CD8-positive, alpha-beta memory T cell (primary cell): ENCODE measurements at regions of chr20 and their contacts with region 1.

Region 1: DNA sequence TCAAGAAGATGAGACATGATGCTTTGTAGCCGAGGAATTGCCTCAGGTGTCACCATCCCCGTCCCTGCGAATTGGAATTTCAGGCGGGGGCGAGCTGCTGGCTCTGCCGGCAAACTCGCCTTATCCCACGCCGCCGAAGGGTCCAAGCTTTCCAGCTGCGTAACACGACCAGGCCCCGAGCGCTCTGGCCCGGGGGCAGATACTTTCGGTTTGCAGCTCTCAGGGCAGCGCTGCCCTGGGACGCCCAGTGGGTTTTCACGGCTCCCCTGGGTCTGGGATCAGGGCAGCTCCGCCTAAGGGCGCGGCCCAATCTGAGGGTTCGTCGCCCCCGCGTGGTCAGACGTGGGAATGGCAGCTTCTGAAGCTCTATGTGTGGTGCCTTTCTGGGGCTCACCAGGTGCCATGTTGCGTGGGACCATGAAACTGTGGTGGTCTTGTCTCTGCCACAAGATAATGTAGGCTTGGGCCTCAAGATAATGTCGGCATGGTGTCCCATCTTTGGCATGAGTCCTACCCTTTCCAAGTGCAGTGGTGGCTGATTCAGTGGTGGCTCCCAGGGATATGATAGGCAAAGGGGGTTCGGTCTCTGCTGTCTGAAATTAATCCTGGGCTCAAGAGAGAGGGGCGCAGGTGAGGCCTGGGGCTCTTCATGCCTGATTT is 20.9 kb downstream of the PIGT start:
- DNase-seq: peak; percentile 78 to 90 (median 84)
- H3K4me3 ChIP-seq: peak overlapping the region; percentile 89
- H3K4me3 Mint-ChIP-seq: peak overlapping the region; percentile 80 to 92 (median 87)
- H3K27ac ChIP-seq: no peak overlapping the region
- H3K27ac Mint-ChIP-seq: peak overlapping the region; percentile 41 to 94 (median 72)
- H3K4me1 ChIP-seq: peaks cover 17% of the 10 kb centered on the region
- H3K4me1 Mint-ChIP-seq: peaks cover 19 to 27% (median 25%) of the 10 kb centered on the region in 3 donors
- H3K27me3 ChIP-seq: no peaks in the 10 kb centered on the region
- H3K27me3 Mint-ChIP-seq: no peaks in the 10 kb centered on the region

Region 2: DNA sequence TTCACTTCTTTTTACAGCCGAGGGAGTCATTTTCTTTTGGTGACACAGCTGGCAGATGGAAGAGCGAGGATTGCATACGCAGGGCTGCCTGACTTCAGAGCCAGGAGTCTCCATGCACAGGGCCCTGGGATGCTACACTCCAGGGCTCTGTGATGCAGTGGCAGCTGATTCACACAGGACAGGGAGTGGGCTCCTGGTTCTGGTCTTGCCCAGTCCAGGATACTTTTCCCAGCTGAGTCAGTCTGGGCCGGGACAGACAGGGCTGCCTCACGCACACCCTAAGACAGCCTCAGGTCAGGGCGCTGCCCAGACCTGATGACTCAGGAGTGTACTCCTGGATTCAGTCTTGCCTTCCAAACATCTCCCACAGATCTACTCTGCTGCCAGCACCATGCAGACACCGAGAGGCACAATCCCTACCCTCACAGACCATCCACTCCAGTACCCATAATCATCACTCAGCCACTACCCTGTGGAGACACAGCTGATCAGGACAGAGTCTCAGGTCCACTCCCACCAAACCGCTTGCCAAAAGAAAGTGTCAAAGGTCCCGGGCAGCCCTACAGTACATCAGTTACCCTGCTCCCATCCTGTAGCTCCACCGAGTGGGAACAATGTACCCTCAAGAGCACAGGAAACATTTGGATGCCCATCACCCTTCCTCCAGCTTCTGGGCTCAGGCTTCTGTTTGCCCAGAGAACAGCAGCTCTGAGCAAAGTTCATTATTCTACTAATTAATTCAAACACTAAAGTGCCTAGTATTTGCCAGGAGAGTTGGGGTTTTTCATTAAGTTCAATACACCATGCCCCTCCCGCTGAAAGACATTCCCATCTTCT is 100.1 kb before region 1 on chr20:
- CTCF ChIA-PET with region 1: interaction called, 10 read pairs
- POLR2A ChIA-PET with region 1: no interaction called
- DNase-seq: no peak
- H3K4me3 ChIP-seq: no peak overlapping the region
- H3K4me3 Mint-ChIP-seq: no peak overlapping the region
- H3K27ac ChIP-seq: no peak overlapping the region
- H3K27ac Mint-ChIP-seq: peak overlapping the region in 1 of 8 donors; percentile 23
- H3K4me1 ChIP-seq: no peaks in the 10 kb centered on the region
- H3K4me1 Mint-ChIP-seq: no peaks in the 10 kb centered on the region
- H3K27me3 ChIP-seq: no peaks in the 10 kb centered on the region
- H3K27me3 Mint-ChIP-seq: no peaks in the 10 kb centered on the region

Region 3: GRCh38 chr20:45362804-45363610 is 73.9 kb before region 1 on chr20 and contains the start of gene SYS1:
- CTCF ChIA-PET with region 1: interaction called, 183 read pairs
- POLR2A ChIA-PET with region 1: interaction called, 33 read pairs
- DNase-seq: peak; percentile 98 to 99 (median 99)
- H3K4me3 ChIP-seq: peak within 1 kb of the TSS; percentile 92
- H3K4me3 Mint-ChIP-seq: peak within 1 kb of the TSS; percentile 90 to 99 (median 98)
- H3K27ac ChIP-seq: peak within 1 kb of the TSS; percentile 96
- H3K27ac Mint-ChIP-seq: peak within 1 kb of the TSS; percentile 95 to 100 (median 99)
- H3K4me1 ChIP-seq: peaks cover 42% of the 10 kb centered on the region
- H3K4me1 Mint-ChIP-seq: peaks cover 44 to 54% (median 48%) of the 10 kb centered on the region in 3 donors
- H3K27me3 ChIP-seq: no peaks in the 10 kb centered on the region
- H3K27me3 Mint-ChIP-seq: peaks cover 0 to 1% of the 10 kb centered on the region in 2 donors
- total RNA-seq, gene SYS1: 48.3 to 54.0 TPM

Region 4: DNA sequence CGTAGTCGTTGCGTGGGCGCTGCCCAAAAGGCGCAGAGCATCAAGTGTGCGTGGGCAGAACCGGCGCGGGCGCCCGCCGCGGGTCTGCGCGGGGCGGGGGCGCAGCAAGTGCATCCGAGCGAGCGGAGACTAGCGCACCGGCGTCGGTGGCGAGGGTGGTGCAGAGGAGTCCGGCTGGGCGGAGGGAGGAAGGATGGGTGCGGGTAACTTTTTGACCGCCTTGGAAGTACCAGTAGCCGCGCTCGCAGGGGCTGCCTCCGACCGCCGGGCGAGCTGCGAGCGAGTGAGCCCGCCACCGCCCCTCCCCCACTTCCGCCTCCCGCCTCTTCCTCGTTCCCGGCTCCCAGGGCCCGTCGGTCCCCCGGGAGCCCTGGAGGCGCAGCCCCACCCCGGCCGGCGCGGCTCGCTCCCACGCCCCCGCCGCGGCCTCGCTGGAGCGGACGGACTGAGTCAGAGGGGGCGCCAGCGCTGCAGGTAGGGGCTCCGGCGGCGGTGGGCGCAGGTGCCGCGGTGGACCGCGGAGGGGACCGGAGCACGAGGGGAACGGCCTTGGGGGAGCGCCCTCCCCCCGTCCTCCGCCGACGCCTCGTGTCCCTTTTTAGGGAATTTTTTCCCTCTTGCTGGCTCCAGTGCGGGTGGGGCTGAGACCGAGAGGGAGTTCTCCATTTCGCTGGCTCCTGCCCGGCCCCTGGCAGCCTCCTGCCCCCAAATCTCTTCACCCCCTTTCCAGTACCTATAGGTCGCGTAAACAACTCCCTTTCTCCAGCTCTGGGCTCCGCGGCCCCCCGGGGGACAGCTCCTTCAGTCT is 30.4 kb before region 1 on chr20:
- CTCF ChIA-PET with region 1: interaction called, 10 read pairs
- POLR2A ChIA-PET with region 1: no interaction called
- DNase-seq: peak; percentile 34 to 64 (median 42)
- H3K4me3 ChIP-seq: peak overlapping the region; percentile 73
- H3K4me3 Mint-ChIP-seq: peak overlapping the region; percentile 77 to 95 (median 82)
- H3K27ac ChIP-seq: peak overlapping the region; percentile 57
- H3K27ac Mint-ChIP-seq: peak overlapping the region in 6 of 8 donors; percentile 26 to 87 (median 58)
- H3K4me1 ChIP-seq: peaks cover 5% of the 10 kb centered on the region
- H3K4me1 Mint-ChIP-seq: peaks cover 8 to 23% (median 17%) of the 10 kb centered on the region in 3 donors
- H3K27me3 ChIP-seq: no peaks in the 10 kb centered on the region
- H3K27me3 Mint-ChIP-seq: peaks cover 0 to 3% of the 10 kb centered on the region in 2 donors

Region 5: GRCh38 chr20:45450097-45450818 is 13.4 kb after region 1 on chr20:
- CTCF ChIA-PET with region 1: interaction called, 29 read pairs
- POLR2A ChIA-PET with region 1: no interaction called
- DNase-seq: peak in 2 of 5 donors; percentile 30 to 32
- H3K4me3 ChIP-seq: no peak overlapping the region
- H3K4me3 Mint-ChIP-seq: no peak overlapping the region
- H3K27ac ChIP-seq: no peak overlapping the region
- H3K27ac Mint-ChIP-seq: no peak overlapping the region
- H3K4me1 ChIP-seq: no peaks in the 10 kb centered on the region
- H3K4me1 Mint-ChIP-seq: peaks cover 5 to 9% (median 8%) of the 10 kb centered on the region in 3 donors
- H3K27me3 ChIP-seq: no peaks in the 10 kb centered on the region
- H3K27me3 Mint-ChIP-seq: peaks cover 8 to 21% of the 10 kb centered on the region in 2 donors